ENCODE measurements at regions of chr16 and their contacts with region 1.

Region 1: DNA sequence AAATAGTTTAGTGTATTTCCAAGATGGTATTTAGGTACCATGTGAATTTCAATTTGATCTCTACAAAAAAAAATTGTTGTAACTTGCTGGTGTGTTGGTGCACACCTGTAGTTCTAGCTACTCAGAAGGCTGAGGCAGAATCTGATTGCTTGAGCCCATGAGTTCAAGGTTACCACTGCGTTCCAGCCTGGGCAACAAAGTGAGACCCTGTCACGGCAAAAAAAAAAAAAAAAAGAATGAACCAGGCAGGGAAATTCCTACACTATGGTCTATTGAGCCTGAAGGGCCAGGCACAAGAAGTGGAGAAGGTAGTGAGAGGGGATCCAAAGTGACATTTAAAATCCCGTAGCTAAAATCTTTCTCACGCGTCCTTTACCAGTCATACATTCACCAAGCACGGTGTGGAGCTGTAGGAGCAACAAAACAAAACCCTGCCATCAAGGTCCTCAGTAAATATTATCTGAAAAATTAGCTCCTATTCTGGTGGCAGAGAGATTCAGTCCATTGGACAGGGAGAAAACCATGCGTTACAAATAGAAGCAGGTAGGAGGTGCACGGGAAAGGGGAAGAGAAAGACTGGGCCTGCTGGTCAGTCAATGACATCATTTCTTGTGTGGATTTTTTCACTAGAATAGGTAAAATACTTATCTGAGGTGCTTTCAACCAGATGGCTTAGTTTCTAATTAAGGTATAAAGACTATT is 27.3 kb downstream of the TXNDC11 start:
- DNase-seq: peak; percentile 60
- CTCF ChIP-seq: no peak

Region 2: DNA sequence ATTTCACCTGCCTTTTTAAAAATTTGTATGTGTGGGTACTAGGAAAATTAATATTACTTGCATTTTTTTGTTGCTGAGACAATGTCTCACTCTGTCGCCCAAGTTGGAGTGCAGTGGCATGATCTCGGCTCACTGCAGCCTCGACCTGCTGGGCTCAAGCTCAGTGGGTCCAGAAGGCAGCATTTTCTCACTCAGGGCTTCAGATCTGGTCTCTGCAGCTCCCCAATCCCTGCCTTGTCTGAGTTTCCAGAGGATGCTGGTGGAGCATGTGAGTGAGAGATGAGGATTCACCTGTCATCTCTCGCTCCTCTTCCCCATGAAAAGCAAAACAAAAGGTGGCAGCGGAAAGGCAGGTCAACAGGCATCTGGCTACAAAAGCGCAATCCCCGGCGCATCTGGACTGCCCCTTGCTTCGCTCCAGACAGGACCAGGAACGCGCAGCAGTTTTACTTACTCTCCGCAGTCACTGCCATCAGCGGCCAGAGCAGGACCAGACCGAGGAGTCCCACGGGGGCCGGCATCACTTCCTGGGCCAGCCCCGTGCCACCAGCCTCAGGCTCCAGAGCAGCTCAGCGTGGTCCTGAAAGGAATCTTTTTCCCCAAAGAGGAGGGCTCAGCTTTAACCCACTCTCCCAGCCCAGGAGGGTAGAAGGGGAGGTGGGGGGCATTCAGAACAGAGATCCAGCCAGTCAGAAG is 188.6 kb before region 1 on chr16:
- CTCF ChIA-PET with region 1: interaction called, 27 read pairs
- POLR2A ChIA-PET with region 1: no interaction called
- DNase-seq: no peak
- CTCF ChIP-seq: no peak

Region 3: DNA sequence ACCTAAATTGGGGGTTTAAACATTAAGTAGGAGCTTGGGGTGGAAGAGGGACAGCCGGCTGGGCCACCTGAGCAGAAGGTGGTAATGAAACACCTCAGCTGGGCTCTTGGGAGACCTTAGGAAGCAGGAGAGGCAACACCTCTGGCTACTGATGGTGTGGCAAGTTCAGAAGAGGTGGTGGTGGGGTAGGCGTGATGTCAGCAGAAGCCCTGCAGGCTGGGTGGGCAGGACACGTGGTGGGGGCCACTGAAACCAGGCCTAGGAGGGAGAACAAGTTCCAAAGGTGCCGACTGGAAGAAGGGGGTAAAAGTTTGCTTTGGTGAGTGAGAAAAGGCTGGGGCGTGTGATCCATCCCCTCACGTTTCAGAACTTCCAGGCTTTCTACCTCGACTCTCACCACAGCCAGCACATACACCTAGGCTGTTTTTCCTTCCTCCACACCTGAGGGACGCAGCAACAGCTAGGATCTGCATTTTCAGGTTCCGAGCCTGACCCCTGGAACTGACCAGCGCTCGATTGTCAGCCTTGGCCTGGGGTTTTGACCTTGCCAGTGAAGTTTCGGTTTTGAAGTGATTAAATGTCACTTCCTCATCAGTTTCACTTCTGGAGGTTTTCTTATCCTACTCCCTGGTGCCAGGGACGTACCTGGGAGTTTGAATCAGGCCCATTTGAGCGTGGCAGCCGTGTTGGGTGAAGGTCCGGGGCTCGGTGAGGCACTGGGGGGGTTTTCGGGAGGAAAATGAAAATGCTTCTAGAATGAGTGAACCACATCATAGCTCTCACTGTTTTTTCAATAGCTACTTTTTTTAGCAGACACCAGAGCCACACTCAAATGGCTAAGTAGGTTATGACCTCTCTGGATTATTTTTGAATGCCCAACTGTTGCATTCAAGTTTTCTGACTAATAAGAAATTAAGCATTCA is 37.2 kb before region 1 on chr16:
- CTCF ChIA-PET with region 1: interaction called, 11 read pairs
- POLR2A ChIA-PET with region 1: interaction called, 3 read pairs
- DNase-seq: peak; percentile 43
- CTCF ChIP-seq: no peak

Region 4: GRCh38 chr16:11725457-11725856 is 10.1 kb after region 1 on chr16:
- CTCF ChIA-PET with region 1: interaction called, 16 read pairs
- POLR2A ChIA-PET with region 1: no interaction called
- DNase-seq: no peak
- CTCF ChIP-seq: no peak

Region 5: DNA sequence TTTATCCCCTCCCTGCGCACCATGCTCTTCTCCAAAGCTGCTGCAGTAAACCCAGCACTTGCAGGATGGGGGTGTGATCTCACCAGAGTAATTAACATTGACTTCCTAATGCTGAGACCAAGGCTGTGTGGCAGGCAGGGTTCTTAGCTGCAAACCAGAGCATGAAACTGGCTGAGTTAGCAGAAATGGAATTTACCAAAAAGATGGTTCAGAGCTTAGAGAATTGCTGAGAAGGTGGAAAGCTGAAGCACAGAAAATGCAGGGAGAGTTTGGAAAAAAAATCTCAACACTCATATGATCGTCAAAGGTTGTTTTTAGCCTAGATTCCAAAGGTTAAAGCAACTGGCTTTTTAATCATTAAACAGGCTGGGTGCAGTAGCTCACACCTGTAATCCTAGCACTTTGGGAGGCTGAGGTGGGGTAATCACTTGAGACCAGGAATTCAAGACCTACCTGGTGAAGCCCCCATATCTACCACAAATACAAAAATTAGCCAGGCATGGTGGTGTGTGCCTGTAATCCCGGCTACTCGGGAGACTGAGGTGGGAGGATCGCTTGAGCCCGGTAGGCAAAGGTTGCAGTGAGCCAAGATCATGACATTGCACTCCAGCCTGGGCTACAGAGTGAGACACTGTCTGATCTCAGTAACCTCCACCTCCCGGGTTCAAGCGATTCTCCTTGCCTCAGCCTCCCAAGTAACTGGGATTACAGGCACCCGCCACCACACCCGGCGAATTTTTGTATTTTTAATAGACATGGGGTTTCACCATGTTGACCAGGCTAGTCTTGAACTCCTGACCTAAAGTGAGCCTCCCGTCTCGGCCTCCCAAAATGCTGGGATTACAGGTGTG is 33.2 kb after region 1 on chr16:
- CTCF ChIA-PET with region 1: no interaction called
- POLR2A ChIA-PET with region 1: no interaction called
- DNase-seq: no peak
- CTCF ChIP-seq: no peak

Measured in GM10248 (cell line).